Testis (tissue), 5 donors: ENCODE measurements at regions of chr4 and their contacts with region 1.

Region 1: GRCh38 chr4:40046311-40046980 is 10.2 kb upstream of the N4BP2 start:
- DNase-seq: no peak
- H3K4me3 ChIP-seq: no peak overlapping the region
- H3K27ac ChIP-seq: no peak overlapping the region
- H3K4me1 ChIP-seq: no peaks in the 10 kb centered on the region
- H3K27me3 ChIP-seq: no peaks in the 10 kb centered on the region
- CTCF ChIP-seq: no peak
- POLR2A ChIP-seq: no peak

Region 2: GRCh38 chr4:38255572-38255971 is 1790.9 kb before region 1 on chr4:
- intact Hi-C with region 1: no loop called
- DNase-seq: no peak
- H3K4me3 ChIP-seq: no peak overlapping the region
- H3K27ac ChIP-seq: no peak overlapping the region
- H3K4me1 ChIP-seq: no peaks in the 10 kb centered on the region
- H3K27me3 ChIP-seq: no peaks in the 10 kb centered on the region
- CTCF ChIP-seq: no peak
- POLR2A ChIP-seq: no peak

Region 3: DNA sequence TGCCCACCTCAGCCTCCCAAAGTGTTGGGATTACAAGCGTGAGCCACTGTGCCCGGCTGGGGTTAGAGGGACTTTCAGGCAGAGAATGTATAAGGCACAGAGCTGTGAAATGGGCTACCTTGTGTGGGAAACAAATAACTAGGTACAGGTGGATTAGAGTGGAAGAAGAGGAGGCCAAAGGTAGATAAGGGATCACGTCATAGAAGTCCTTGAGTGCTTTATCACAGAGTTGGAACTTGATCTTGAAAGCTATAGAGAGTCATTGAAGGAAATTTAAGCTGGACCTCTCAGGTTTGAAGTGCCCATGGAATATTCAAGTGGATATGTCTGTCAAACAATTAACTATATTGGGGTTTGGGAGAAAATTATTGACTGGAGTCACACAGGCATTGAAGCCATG is 18.6 kb after region 1 on chr4:
- intact Hi-C with region 1: no loop called
- DNase-seq: no peak
- H3K4me3 ChIP-seq: no peak overlapping the region
- H3K27ac ChIP-seq: no peak overlapping the region
- H3K4me1 ChIP-seq: no peaks in the 10 kb centered on the region
- H3K27me3 ChIP-seq: no peaks in the 10 kb centered on the region
- CTCF ChIP-seq: no peak
- POLR2A ChIP-seq: no peak

Region 4: GRCh38 chr4:40238700-40239548 is 192.5 kb after region 1 on chr4:
- intact Hi-C with region 1: loop called (anchors 10 kb)
- DNase-seq: no peak
- H3K4me3 ChIP-seq: no peak overlapping the region
- H3K27ac ChIP-seq: no peak overlapping the region
- H3K4me1 ChIP-seq: no peaks in the 10 kb centered on the region
- H3K27me3 ChIP-seq: no peaks in the 10 kb centered on the region
- CTCF ChIP-seq: no peak
- POLR2A ChIP-seq: no peak